AG04449 (cell line): ENCODE measurements at regions of chr9 and their contacts with region 1.

Region 1: DNA sequence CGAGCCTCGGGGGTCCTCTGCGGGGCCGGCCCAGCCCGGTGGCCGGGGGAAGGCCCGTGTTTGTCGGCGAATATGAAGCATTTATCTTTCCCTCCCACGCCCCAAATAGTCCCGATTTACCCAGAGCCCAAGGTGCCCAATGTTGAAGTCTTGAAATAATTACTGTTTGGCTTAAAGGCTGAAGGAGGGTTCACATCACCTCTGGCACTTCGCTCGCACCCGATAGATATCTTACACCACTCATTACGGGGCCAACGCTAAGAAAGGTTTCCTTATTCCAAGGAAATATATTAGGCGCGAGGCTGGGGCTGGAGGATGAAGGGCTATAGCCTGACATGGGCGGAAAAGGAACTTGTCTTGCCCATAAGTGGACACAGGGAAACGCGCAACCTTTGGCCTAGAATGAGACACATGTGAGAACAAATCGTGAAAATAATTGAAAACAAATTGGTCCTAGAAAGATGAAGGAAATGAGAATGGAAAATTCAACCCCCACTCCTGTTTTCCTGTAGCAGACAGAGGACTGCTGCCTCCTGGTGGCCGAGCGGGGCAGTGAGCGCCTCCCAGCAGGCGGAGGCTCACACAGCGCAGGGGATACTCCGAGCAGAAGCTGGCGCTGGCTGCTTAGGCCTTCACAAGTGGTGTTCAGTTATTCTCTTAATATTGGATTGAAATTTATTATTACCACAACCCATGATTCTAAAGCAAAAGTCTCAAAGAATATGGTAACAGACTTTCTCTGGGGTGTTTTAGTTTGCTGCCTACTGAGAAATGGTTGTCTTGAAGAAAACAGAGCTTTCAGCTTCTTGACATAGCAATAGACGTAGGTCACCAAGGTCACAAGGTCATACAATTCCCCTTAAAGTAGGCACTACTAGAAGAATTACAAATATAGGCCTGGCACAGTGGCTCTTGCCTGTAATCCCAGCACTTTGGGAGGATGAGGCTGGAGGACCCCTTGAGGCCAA is 7.9 kb downstream of the CCL21 start:
- DNase-seq: peak; percentile 16
- H3K4me3 ChIP-seq: peak overlapping the region; percentile 62
- CTCF ChIP-seq: peak; percentile 99

Region 2: DNA sequence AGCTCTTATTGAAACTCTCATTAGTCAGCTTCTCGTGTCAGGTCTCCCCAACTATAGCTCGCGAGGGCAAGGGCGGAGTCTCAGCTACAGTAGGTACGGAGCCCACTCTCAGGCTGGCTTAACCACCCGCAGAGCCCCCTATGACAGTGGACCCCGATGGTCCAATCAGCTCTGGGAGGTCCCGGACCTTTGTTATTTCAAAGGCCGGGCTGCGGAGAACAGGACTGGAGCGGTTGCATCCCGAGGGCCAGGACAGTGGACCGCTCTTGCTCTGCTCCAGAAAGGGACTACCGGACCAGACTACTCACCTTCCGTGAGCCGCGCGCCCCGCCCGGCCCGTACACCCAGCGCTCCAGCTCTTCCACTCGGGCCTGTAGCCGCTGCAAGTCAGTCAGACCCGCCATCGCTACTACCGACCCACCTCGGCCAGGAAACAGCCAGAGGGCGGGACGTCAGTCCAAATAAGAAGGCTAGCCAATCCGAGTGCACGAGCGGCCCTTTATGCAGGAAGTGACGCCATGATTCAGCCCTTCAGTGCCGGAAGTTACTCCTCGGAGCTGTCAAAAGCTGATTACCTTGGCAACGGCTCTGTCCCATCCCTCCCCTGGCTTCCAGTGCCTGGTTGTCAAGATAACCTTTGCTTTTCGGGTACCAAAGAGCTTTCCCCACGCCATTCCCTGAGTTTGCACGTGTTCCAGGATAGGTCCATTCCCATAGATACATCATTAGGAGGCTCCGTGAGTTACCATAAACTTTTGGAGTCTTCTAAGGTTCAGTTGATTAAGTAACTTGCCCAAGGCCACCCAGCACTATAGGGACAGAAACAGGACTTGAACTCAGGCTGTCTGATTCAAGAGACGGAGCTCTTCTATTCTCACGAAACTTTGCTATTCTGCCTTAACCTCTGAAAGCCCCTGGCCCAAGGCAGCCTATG is 81.7 kb before region 1 on chr9 and contains the start of gene DCTN3:
- CTCF ChIA-PET with region 1: interaction called, 47 read pairs
- POLR2A ChIA-PET with region 1: no interaction called
- DNase-seq: peak; percentile 75
- H3K4me3 ChIP-seq: peak within 1 kb of the TSS; percentile 92
- CTCF ChIP-seq: no peak

Region 3: GRCh38 chr9:34659592-34660535 is 42.2 kb before region 1 on chr9:
- CTCF ChIA-PET with region 1: interaction called, 13 read pairs
- POLR2A ChIA-PET with region 1: no interaction called
- DNase-seq: no peak
- H3K4me3 ChIP-seq: no peak overlapping the region
- CTCF ChIP-seq: no peak

Region 4: GRCh38 chr9:34675048-34675714 is 26.9 kb before region 1 on chr9:
- CTCF ChIA-PET with region 1: interaction called, 70 read pairs
- POLR2A ChIA-PET with region 1: no interaction called
- DNase-seq: no peak
- H3K4me3 ChIP-seq: no peak overlapping the region
- CTCF ChIP-seq: peak; percentile 87

Region 5: GRCh38 chr9:35001803-35002502 is 299.9 kb after region 1 on chr9:
- CTCF ChIA-PET with region 1: no interaction called
- POLR2A ChIA-PET with region 1: no interaction called
- DNase-seq: no peak
- H3K4me3 ChIP-seq: no peak overlapping the region
- CTCF ChIP-seq: no peak